Stomach (tissue), 19 donors: ENCODE measurements at regions of chr16 and their contacts with region 1.

Region 1: DNA sequence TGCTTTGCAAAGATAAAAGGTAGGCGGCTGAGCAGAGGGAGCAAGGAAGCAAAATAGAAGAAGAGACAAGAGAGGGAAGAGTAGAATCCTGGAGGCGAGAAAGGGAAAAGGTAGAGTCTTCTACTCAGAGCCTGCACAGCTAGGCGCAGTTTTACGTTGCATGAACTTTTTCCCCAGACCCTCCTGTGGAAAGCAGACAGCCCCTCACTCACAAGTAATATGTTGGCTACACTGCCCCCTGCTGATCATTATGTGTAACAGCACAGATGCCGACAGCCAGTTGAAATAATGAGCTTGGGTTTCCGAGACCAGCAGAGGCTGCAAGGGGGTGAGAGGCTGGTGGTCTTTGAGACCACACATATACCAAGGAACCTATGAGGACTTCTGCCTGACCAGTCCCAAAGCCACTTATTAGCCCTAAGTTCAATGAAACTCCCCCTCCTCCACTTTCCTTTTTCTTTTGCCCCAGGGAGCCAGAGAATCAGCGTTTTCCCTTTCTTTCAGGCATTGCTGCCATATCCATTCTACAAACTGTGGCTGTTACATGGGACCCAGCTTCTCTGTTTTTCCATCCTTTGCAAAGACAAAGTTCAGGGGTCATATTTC is 22.5 kb upstream of the CMTR2 start:
- DNase-seq: peak in 1 of 2 donors; percentile 56
- H3K4me3 ChIP-seq: no peak overlapping the region
- H3K27ac ChIP-seq: no peak overlapping the region
- H3K4me1 ChIP-seq: no peaks in the 10 kb centered on the region
- H3K27me3 ChIP-seq: peaks cover 0 to 34% (median 8%) of the 10 kb centered on the region in 3 donors
- CTCF ChIP-seq: peak in 5 of 7 experiments; percentile 45 to 74 (median 63)
- EP300 ChIP-seq: no peak
- POLR2A ChIP-seq: no peak

Region 2: GRCh38 chr16:71214746-71215381 is 96.8 kb before region 1 on chr16:
- intact Hi-C with region 1: loop called (anchors 10 kb)
- DNase-seq: peak in 1 of 2 donors; percentile 11
- H3K4me3 ChIP-seq: no peak overlapping the region
- H3K27ac ChIP-seq: no peak overlapping the region
- H3K4me1 ChIP-seq: no peaks in the 10 kb centered on the region
- H3K27me3 ChIP-seq: no peaks in the 10 kb centered on the region
- CTCF ChIP-seq: no peak
- EP300 ChIP-seq: no peak
- POLR2A ChIP-seq: no peak